ENCODE measurements at regions of chr4 and their contacts with region 1.

Region 1: GRCh38 chr4:38298868-38299713 is 338.9 kb downstream of the PTTG2 start:
- DNase-seq: no peak
- ATAC-seq: no peak

Region 2: GRCh38 chr4:37023504-37023903 is 1275.6 kb before region 1 on chr4:
- intact Hi-C with region 1: no loop called
- DNase-seq: no peak
- ATAC-seq: no peak

Region 3: GRCh38 chr4:38154681-38155608 is 144.1 kb before region 1 on chr4:
- intact Hi-C with region 1: no loop called
- DNase-seq: no peak
- ATAC-seq: peak; percentile 68

Region 4: DNA sequence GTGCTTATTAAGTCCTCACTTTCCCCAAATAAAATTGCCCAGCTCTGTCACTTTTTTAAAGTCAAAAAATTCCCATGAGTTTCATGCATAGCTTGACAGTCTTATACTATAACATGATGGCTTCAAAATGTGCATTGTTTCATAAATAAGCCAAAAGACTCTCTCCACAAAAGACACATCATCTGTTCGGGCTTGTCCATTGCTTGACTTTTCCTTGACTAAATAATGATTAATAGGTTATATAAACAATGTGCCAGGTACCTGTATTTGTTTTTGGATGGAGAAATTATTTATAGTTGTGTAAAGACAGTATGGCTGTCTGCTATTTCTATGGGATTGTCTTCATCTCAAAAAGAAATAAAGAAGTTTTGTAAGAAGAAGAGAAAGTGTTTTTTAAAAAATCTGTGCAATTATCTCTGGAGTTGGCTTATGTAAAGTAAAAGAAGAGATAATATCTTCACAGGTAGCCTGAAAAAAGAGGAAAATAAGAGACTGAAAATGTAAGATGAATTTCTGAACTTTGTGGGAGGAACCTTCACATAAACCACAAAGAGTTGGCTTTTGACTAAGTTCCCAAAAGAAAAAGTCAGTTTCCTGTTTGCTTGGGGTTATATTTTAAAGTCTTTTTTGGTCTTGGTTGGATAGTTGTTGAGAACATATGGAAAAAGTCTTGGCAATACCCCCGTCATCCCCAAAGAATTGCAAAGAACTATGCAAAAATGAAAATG is 35.9 kb after region 1 on chr4:
- intact Hi-C with region 1: loop called (anchors 2 kb)
- DNase-seq: no peak
- ATAC-seq: no peak